CD4-positive, alpha-beta memory T cell (primary cell): ENCODE measurements at regions of chr7 and their contacts with region 1.

Region 1: DNA sequence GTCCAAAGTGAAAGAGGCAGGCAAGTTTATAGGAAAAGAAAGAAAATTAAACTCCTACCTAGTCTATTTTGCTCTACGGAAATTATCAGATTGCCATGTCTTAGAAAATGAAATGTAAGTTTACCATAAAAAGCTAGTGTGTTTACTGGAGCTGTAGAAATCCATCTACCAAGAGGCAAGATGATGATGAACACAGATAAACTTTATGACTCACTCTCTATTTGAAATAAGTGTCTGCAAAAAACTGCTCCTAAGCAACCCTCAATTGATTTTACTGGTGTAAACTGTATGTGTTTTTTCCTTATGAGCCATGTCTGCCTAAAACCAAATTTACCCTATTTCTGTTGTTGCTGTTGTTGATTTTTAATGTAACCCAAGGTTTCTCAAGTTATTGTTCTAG is 73.8 kb upstream of the TMEM106B start:
- DNase-seq: no peak
- H3K4me3 ChIP-seq: no peak overlapping the region
- H3K4me3 Mint-ChIP-seq: no peak overlapping the region
- H3K27ac ChIP-seq: no peak overlapping the region
- H3K27ac Mint-ChIP-seq: no peak overlapping the region
- H3K4me1 ChIP-seq: no peaks in the 10 kb centered on the region
- H3K4me1 Mint-ChIP-seq: peaks cover 0 to 16% (median 1%) of the 10 kb centered on the region in 4 donors
- H3K27me3 ChIP-seq: no peaks in the 10 kb centered on the region
- H3K27me3 Mint-ChIP-seq: peaks cover 6 to 9% of the 10 kb centered on the region in 2 donors

Region 2: GRCh38 chr7:12123172-12123571 is 14.1 kb before region 1 on chr7:
- CTCF ChIA-PET with region 1: no interaction called
- POLR2A ChIA-PET with region 1: no interaction called
- intact Hi-C with region 1: no loop called
- DNase-seq: no peak
- H3K4me3 ChIP-seq: no peak overlapping the region
- H3K4me3 Mint-ChIP-seq: no peak overlapping the region
- H3K27ac ChIP-seq: no peak overlapping the region
- H3K27ac Mint-ChIP-seq: no peak overlapping the region
- H3K4me1 ChIP-seq: no peaks in the 10 kb centered on the region
- H3K4me1 Mint-ChIP-seq: peaks cover 0 to 5% (median 3%) of the 10 kb centered on the region in 4 donors
- H3K27me3 ChIP-seq: peaks cover 4% of the 10 kb centered on the region
- H3K27me3 Mint-ChIP-seq: peaks cover 7 to 11% of the 10 kb centered on the region in 2 donors

Region 3: GRCh38 chr7:12154119-12154518 is 16.8 kb after region 1 on chr7:
- CTCF ChIA-PET with region 1: interaction called, 3 read pairs
- POLR2A ChIA-PET with region 1: no interaction called
- intact Hi-C with region 1: loop called (anchors 2 kb)
- DNase-seq: no peak
- H3K4me3 ChIP-seq: no peak overlapping the region
- H3K4me3 Mint-ChIP-seq: no peak overlapping the region
- H3K27ac ChIP-seq: no peak overlapping the region
- H3K27ac Mint-ChIP-seq: no peak overlapping the region
- H3K4me1 ChIP-seq: no peaks in the 10 kb centered on the region
- H3K4me1 Mint-ChIP-seq: peaks cover 0 to 7% (median 5%) of the 10 kb centered on the region in 4 donors
- H3K27me3 ChIP-seq: no peaks in the 10 kb centered on the region
- H3K27me3 Mint-ChIP-seq: peaks cover 0 to 2% of the 10 kb centered on the region in 2 donors

Region 4: GRCh38 chr7:12178317-12178716 is 41.0 kb after region 1 on chr7:
- CTCF ChIA-PET with region 1: no interaction called
- POLR2A ChIA-PET with region 1: no interaction called
- intact Hi-C with region 1: no loop called
- DNase-seq: no peak
- H3K4me3 ChIP-seq: no peak overlapping the region
- H3K4me3 Mint-ChIP-seq: no peak overlapping the region
- H3K27ac ChIP-seq: no peak overlapping the region
- H3K27ac Mint-ChIP-seq: no peak overlapping the region
- H3K4me1 ChIP-seq: no peaks in the 10 kb centered on the region
- H3K4me1 Mint-ChIP-seq: peaks cover 0 to 5% (median 0%) of the 10 kb centered on the region in 4 donors
- H3K27me3 ChIP-seq: no peaks in the 10 kb centered on the region
- H3K27me3 Mint-ChIP-seq: no peaks in the 10 kb centered on the region

Region 5: GRCh38 chr7:12851841-12852240 is 714.6 kb after region 1 on chr7:
- CTCF ChIA-PET with region 1: no interaction called
- POLR2A ChIA-PET with region 1: no interaction called
- intact Hi-C with region 1: no loop called
- DNase-seq: no peak
- H3K4me3 ChIP-seq: no peak overlapping the region
- H3K4me3 Mint-ChIP-seq: no peak overlapping the region
- H3K27ac ChIP-seq: no peak overlapping the region
- H3K27ac Mint-ChIP-seq: no peak overlapping the region
- H3K4me1 ChIP-seq: no peaks in the 10 kb centered on the region
- H3K4me1 Mint-ChIP-seq: peaks cover 0 to 1% (median 0%) of the 10 kb centered on the region in 4 donors
- H3K27me3 ChIP-seq: no peaks in the 10 kb centered on the region
- H3K27me3 Mint-ChIP-seq: no peaks in the 10 kb centered on the region